HAP-1 (cell line): ENCODE measurements at regions of chr4 and their contacts with region 1.

Region 1: GRCh38 chr4:71713611-71714203 is 70.2 kb downstream of the GC start:
- DNase-seq: peak in 1 of 2 experiments; percentile 53
- H3K4me3 ChIP-seq: no peak overlapping the region
- H3K4me1 ChIP-seq: no peaks in the 10 kb centered on the region
- H3K27me3 ChIP-seq: peaks cover 3% of the 10 kb centered on the region; the same call in 1 of the 2 replicates

Region 2: DNA sequence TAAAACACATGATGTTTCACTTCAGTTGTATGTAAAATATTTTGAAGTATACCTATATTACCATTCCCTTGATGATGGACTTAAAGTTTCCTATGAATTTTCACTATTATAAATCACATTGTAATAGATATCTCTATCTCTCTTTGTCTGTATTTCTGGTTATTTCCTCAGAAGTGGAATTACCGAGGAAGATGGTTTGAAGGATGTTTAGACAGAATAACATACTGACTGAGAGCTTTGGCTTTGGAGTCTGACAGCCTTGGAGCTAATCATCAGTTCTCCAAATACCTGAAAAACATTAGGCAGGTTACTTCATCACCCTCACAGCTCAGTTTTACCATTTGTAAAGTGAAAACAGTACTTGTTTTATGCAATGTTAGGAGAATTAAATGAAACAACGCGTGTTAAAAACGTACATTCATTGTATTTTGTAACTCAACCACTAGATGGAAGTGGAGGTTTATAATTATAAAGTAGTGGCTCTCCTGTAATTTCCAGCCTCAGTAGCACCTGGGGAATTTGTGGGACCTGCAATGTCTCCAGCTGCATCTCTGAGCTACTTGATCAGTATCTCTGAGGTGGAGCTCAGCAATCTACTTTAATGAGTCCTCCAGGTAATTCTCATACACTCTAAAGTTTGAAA is 1061.7 kb before region 1 on chr4:
- in situ Hi-C with region 1: loop called (anchors 25 kb)
- DNase-seq: peak in 1 of 2 experiments; percentile 37
- H3K4me3 ChIP-seq: no peak overlapping the region
- H3K4me1 ChIP-seq: no peaks in the 10 kb centered on the region
- H3K27me3 ChIP-seq: peaks cover 13% of the 10 kb centered on the region

Region 3: DNA sequence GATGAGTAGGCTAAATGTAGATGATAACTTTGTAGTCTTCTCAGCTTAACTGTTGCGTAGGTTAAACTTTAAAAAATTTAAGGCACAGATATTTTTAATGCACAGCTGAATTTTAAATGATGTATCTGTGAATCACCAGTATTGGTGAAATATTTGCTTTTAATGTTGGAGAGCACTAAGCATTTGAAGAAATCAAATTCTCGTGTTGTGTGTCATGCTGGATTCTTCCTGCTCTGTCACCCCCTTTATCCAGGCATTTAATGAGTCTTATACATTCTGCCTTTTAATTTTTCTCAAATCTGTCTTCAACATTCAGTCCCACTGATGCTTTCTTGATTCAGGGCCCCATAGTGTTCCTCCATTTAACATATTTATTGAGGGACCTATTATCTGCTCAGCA is 298.2 kb before region 1 on chr4:
- in situ Hi-C with region 1: no loop called
- DNase-seq: no peak
- H3K4me3 ChIP-seq: no peak overlapping the region
- H3K4me1 ChIP-seq: no peaks in the 10 kb centered on the region
- H3K27me3 ChIP-seq: no peaks in the 10 kb centered on the region